ENCODE measurements at regions of chr7 and their contacts with region 1.

Region 1: GRCh38 chr7:70693686-70694360 is 438.1 kb upstream of the GALNT17 start:
- DNase-seq: peak; percentile 70 to 83
- ATAC-seq: peak; percentile 73 to 88 (median 81)
- H3K4me3 ChIP-seq: peak overlapping the region; percentile 11
- H3K4me3 Mint-ChIP-seq: peak overlapping the region; percentile 86
- H3K27ac ChIP-seq: peak overlapping the region; percentile 4
- H3K27ac Mint-ChIP-seq: peak overlapping the region; percentile 63 to 84
- H3K4me1 ChIP-seq: peaks cover 18% of the 10 kb centered on the region
- H3K4me1 Mint-ChIP-seq: peaks cover 41 to 47% of the 10 kb centered on the region in 2 donors
- H3K27me3 ChIP-seq: no peaks in the 10 kb centered on the region
- H3K27me3 Mint-ChIP-seq: no peaks in the 10 kb centered on the region
- CTCF ChIP-seq: no peak

Region 2: DNA sequence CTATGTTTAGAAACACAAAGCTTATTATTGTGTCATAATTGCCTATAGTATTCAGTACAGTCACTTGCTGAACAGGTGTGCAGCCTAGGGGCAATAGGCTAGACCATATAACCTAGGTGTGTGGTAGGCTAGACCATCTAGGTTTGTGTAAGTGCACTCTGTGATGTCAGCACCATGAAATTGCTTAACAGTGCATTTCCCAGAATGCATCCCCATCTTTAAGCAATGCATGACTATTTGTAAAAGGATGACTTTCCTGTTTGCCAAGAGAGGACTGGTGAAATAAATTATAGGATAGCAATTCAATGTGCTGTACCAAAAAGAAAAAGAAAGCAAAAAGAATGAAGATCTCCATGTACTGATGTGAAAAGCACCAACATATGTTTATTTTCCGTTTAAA is 1384.2 kb before region 1 on chr7:
- intact Hi-C with region 1: no loop called
- DNase-seq: no peak
- ATAC-seq: no peak
- H3K4me3 ChIP-seq: no peak overlapping the region
- H3K4me3 Mint-ChIP-seq: no peak overlapping the region
- H3K27ac ChIP-seq: no peak overlapping the region
- H3K27ac Mint-ChIP-seq: no peak overlapping the region
- H3K4me1 ChIP-seq: no peaks in the 10 kb centered on the region
- H3K4me1 Mint-ChIP-seq: no peaks in the 10 kb centered on the region
- H3K27me3 ChIP-seq: no peaks in the 10 kb centered on the region
- H3K27me3 Mint-ChIP-seq: peaks cover 0 to 6% of the 10 kb centered on the region in 2 donors
- CTCF ChIP-seq: no peak

Region 3: DNA sequence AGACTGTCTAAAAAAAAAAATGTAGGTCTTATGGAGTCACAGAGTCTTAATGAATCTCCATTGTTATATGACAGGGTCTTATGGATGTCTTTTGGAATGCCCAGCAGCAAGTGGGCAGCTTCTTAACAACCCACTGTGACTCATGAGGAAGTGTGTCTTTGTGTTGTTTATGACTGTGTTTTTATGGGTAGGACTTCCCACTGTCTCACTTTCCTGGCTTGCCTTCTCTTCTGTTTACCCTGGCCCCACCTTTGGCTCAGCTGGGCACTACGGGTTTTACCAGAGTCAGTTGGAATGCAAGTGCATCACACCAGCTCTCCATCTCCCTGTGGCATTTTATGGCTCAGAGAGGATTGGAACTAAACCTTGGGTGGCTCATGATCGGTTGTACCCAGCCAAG is 515.0 kb before region 1 on chr7:
- intact Hi-C with region 1: loop called (anchors 10 kb)
- DNase-seq: no peak
- ATAC-seq: no peak
- H3K4me3 ChIP-seq: no peak overlapping the region
- H3K4me3 Mint-ChIP-seq: no peak overlapping the region
- H3K27ac ChIP-seq: no peak overlapping the region
- H3K27ac Mint-ChIP-seq: no peak overlapping the region
- H3K4me1 ChIP-seq: peaks cover 11% of the 10 kb centered on the region
- H3K4me1 Mint-ChIP-seq: peaks cover 8 to 9% of the 10 kb centered on the region in 2 donors
- H3K27me3 ChIP-seq: peaks cover 12% of the 10 kb centered on the region
- H3K27me3 Mint-ChIP-seq: peaks cover 34 to 40% of the 10 kb centered on the region in 2 donors
- CTCF ChIP-seq: no peak

Region 4: GRCh38 chr7:70307544-70308106 is 386.2 kb before region 1 on chr7:
- intact Hi-C with region 1: loop called (anchors 10 kb)
- DNase-seq: peak in 1 of 2 donors; percentile 49
- ATAC-seq: no peak
- H3K4me3 ChIP-seq: no peak overlapping the region
- H3K4me3 Mint-ChIP-seq: no peak overlapping the region
- H3K27ac ChIP-seq: no peak overlapping the region
- H3K27ac Mint-ChIP-seq: no peak overlapping the region
- H3K4me1 ChIP-seq: peaks cover 22% of the 10 kb centered on the region
- H3K4me1 Mint-ChIP-seq: peaks cover 42% of the 10 kb centered on the region in 2 donors
- H3K27me3 ChIP-seq: no peaks in the 10 kb centered on the region
- H3K27me3 Mint-ChIP-seq: peaks cover 0 to 8% of the 10 kb centered on the region in 2 donors
- CTCF ChIP-seq: no peak

Region 5: DNA sequence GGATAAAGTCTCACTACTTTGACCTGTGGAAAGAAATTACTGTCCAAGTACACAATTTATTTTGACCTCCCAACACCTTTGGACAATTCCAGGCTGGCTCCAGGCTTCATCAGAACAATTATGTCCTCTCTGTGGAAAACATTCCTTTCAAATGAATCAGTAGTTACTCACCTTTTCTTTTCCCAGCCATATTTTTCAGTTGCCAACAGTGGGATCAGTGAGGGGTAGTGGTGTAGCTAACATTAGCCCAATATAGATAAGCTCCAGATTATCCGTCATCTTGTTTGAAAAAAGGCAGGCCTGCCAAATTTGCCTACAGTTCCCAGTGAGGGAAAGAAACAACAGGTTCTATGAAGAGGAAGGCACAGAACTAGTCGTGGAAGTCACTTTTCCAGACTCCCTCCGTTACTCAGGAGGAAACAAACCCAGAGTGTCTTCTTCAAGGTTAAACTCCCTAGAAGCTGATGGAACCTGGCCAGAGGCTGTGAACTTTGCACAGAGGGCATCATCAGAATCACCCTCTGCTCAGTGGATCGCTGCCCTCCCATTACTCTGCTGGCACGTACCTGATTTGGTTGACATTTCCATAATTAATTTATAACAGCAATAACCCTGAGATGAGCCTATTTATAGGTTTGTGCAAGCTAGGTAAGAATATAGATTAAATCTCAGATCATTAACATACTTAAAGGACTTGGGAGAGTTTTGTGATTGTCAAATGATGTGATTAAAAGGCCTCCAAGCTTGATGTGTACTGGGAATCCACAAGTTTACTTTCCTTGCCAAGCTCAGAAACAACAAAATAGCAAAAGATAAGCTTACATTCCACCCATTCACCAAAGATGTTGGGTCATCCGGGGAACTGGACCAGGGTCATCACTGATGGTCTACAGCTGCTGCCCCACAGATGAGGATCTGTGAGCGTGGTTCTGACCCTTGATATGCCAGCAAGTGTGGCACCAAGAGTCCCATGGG is 216.5 kb before region 1 on chr7:
- intact Hi-C with region 1: loop called (anchors 5 kb)
- DNase-seq: no peak
- ATAC-seq: no peak
- H3K4me3 ChIP-seq: no peak overlapping the region
- H3K4me3 Mint-ChIP-seq: no peak overlapping the region
- H3K27ac ChIP-seq: no peak overlapping the region
- H3K27ac Mint-ChIP-seq: no peak overlapping the region
- H3K4me1 ChIP-seq: peaks cover 14% of the 10 kb centered on the region
- H3K4me1 Mint-ChIP-seq: peaks cover 15 to 18% of the 10 kb centered on the region in 2 donors
- H3K27me3 ChIP-seq: peaks cover 15% of the 10 kb centered on the region
- H3K27me3 Mint-ChIP-seq: peaks cover 27 to 70% of the 10 kb centered on the region in 2 donors
- CTCF ChIP-seq: no peak

Region 6: GRCh38 chr7:70489813-70490212 is 204.0 kb before region 1 on chr7:
- intact Hi-C with region 1: no loop called
- DNase-seq: no peak
- ATAC-seq: no peak
- H3K4me3 ChIP-seq: no peak overlapping the region
- H3K4me3 Mint-ChIP-seq: no peak overlapping the region
- H3K27ac ChIP-seq: no peak overlapping the region
- H3K27ac Mint-ChIP-seq: no peak overlapping the region
- H3K4me1 ChIP-seq: no peaks in the 10 kb centered on the region
- H3K4me1 Mint-ChIP-seq: no peaks in the 10 kb centered on the region
- H3K27me3 ChIP-seq: no peaks in the 10 kb centered on the region
- H3K27me3 Mint-ChIP-seq: no peaks in the 10 kb centered on the region
- CTCF ChIP-seq: no peak

Region 7: DNA sequence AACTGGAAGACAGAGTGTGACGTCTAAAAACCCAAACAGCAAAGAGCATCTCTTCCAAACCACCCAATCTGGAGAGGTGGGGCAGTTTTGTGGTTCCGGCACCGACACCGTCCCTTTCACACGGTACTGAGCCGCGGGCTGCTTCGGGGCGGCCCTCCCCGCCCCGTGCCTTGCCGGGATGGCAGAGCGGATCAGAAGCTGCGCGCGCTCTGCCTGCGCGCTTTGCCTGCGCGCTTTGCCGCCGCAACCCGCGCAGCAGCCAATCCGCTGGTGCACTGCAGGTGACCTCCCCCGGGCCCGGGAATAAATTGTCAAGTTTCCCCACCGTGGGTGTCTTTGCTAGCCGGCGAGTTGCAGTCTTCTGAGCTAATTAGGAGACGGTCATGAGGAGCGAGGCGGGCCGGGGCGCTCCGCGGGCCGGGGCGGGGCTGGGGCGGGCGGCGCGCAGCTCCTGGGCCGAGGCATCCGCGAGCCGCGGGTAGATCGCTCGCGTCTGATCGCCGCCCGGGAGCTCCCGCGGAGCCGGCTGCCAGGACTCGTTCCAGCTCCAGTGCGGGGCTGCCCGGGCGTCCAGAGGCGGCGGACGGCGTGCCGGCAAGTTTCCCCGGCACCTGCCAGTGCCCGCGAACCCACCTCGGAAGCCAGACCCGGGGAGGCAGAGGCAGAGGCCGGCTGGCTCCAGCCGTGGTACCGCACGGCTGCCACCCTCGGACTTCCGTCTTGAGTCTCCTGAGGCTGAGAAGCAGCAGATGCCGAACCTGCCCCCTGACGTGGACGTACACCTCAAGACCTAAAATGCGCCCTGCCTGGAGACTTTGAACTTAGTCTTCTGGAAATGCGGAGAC is 97.8 kb before region 1 on chr7:
- intact Hi-C with region 1: loop called (anchors 5 kb)
- DNase-seq: peak; percentile 18 to 33
- ATAC-seq: peak; percentile 57 to 83 (median 82)
- H3K4me3 ChIP-seq: no peak overlapping the region
- H3K4me3 Mint-ChIP-seq: peak overlapping the region; percentile 80
- H3K27ac ChIP-seq: no peak overlapping the region
- H3K27ac Mint-ChIP-seq: no peak overlapping the region
- H3K4me1 ChIP-seq: peaks cover 13% of the 10 kb centered on the region
- H3K4me1 Mint-ChIP-seq: peaks cover 12 to 16% of the 10 kb centered on the region in 2 donors
- H3K27me3 ChIP-seq: peaks cover 13% of the 10 kb centered on the region
- H3K27me3 Mint-ChIP-seq: peaks cover 33% of the 10 kb centered on the region in 2 donors
- CTCF ChIP-seq: no peak

Region 8: GRCh38 chr7:70634610-70635068 is 59.2 kb before region 1 on chr7:
- intact Hi-C with region 1: no loop called
- DNase-seq: peak in 1 of 2 donors; percentile 15
- ATAC-seq: peak in 2 of 3 donors; percentile 12 to 66
- H3K4me3 ChIP-seq: no peak overlapping the region
- H3K4me3 Mint-ChIP-seq: no peak overlapping the region
- H3K27ac ChIP-seq: no peak overlapping the region
- H3K27ac Mint-ChIP-seq: peak overlapping the region in 1 of 2 donors; percentile 52
- H3K4me1 ChIP-seq: peaks cover 14% of the 10 kb centered on the region
- H3K4me1 Mint-ChIP-seq: peaks cover 6 to 20% of the 10 kb centered on the region in 2 donors
- H3K27me3 ChIP-seq: no peaks in the 10 kb centered on the region
- H3K27me3 Mint-ChIP-seq: no peaks in the 10 kb centered on the region
- CTCF ChIP-seq: no peak

Region 9: DNA sequence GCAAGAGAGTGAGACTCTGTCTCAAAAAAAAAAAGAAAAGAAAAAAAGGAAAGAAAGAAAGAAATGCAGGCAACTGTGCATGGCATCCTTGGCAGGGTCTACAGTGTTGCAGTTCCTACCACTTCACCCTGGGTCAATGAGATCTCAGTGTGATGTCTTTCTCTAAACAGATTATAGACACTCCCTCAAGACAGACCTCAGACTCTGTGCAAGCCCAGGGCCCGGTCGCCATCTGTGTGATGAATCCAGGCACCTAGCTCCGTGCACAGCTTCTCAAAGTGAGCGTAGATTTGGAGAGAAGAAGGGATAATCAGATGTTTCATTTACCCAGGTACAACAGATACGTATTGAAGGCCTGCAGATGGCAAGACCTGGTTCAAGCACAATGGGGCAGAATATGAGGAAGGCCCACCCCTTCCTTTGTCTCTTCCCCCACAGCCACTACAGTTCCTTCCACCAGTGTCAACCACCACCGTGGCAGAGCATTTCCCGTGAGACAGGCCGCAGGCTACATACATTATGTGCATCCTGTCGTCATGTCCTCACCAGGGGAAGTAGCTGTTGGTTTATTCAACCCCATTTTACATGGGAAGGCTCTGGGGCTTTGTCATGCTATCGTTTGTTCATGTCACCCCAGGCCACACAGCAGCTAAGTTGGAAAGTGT is 33.5 kb before region 1 on chr7:
- intact Hi-C with region 1: loop called (anchors 1 kb)
- DNase-seq: peak; percentile 77 to 85
- ATAC-seq: peak; percentile 86 to 95 (median 92)
- H3K4me3 ChIP-seq: no peak overlapping the region
- H3K4me3 Mint-ChIP-seq: peak overlapping the region; percentile 71
- H3K27ac ChIP-seq: peak overlapping the region; percentile 78
- H3K27ac Mint-ChIP-seq: peak overlapping the region; percentile 81 to 89
- H3K4me1 ChIP-seq: peaks cover 38% of the 10 kb centered on the region
- H3K4me1 Mint-ChIP-seq: peaks cover 37 to 47% of the 10 kb centered on the region in 2 donors
- H3K27me3 ChIP-seq: no peaks in the 10 kb centered on the region
- H3K27me3 Mint-ChIP-seq: no peaks in the 10 kb centered on the region
- CTCF ChIP-seq: no peak

Measured in natural killer cell (primary cell).